ENCODE measurements at regions of chr10 and their contacts with region 1.

Region 1: DNA sequence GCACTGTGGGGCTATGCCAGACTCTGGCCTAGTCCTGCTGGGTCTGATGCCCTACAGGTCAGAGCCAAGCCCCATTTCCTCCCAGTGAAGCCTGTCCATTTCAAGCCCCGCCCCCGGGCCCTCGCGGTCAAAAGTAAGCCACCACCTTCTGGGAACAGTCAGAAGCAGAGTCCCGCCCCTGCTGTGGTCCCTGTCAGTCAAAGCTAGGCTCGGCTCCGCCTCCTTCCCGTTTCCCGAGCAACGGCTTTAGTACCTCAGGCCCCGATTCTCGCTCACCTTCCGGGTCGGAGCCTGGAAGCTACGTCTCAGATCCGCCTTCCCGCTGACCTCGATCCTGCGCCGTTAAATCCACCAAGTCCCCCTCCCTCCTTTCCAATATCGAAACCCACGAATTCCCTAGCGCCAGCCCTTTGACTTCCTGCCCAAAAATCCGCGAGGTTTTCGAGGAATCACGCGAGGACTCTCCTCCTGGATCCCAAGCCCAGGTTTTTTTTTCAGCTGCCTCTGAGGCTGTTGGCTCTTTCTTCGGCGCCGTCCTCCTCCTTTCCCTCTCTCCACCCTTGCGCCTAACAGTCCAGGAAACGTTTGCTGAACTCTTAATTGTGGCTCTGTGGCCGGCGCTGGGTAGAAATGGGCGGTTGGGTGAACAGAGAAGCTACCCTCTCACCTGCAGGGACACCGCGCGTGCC is 11.8 kb downstream of the SFXN3 start:
- DNase-seq: peak; percentile 96
- H3K4me3 Mint-ChIP-seq: peak overlapping the region; percentile 96
- H3K27ac Mint-ChIP-seq: peak overlapping the region; percentile 89
- H3K4me1 Mint-ChIP-seq: peaks cover 21% of the 10 kb centered on the region
- H3K27me3 Mint-ChIP-seq: peaks cover 18% of the 10 kb centered on the region

Region 2: DNA sequence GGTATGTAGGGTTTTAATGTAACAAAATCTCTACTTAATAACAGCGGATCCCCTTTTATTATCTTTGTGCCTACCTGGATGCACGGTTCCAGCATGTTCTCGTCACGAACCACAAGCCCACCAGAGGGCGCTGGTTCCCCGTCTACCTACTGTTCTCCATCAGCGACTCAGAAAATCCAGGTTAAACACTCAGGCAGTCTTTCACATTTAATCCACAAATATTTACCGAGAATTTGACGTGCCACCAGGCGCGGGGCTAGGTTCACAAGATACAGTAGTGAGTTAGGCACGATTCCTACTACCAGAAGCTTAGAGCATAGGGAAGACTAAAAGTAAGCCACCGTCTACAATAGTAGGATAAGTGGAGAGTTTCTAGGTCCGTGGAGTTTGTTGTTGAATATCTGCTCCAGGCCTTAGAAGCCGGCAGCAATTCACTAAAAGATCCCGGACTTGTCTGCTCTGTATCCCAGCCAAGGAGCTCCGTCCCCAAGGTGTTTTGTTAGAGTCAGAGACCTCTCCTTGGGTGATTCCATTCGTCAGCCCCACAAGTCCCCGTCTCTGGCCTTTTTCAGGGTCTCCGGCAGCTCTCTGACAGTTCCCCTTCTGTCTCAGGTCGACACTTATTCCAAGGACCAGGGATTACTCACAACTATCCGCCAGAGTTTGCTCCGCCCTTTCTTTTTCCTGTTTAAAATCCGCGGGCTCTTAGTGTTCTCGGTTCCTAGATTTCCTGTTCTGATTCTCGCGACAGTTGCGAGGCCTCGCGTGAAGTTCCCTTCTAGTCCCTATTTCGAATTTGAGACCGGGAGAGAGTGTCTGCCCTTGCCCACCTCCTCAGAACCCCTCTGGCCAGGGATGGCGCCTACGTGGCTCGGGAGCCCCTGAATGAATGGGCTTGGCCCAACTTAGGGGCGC is 17.5 kb after region 1 on chr10:
- CTCF ChIA-PET with region 1: interaction called, 559 read pairs
- POLR2A ChIA-PET with region 1: interaction called, 3 read pairs
- intact Hi-C with region 1: loop called (anchors 1 kb)
- DNase-seq: peak; percentile 92
- H3K4me3 Mint-ChIP-seq: peak overlapping the region; percentile 95
- H3K27ac Mint-ChIP-seq: peak overlapping the region; percentile 85
- H3K4me1 Mint-ChIP-seq: peaks cover 17% of the 10 kb centered on the region
- H3K27me3 Mint-ChIP-seq: peaks cover 21% of the 10 kb centered on the region

Region 3: GRCh38 chr10:101067356-101068083 is 24.7 kb after region 1 on chr10:
- CTCF ChIA-PET with region 1: interaction called, 559 read pairs
- POLR2A ChIA-PET with region 1: interaction called, 3 read pairs
- intact Hi-C with region 1: loop called (anchors 1 kb)
- DNase-seq: peak; percentile 87
- H3K4me3 Mint-ChIP-seq: peak overlapping the region; percentile 73
- H3K27ac Mint-ChIP-seq: no peak overlapping the region
- H3K4me1 Mint-ChIP-seq: peaks cover 12% of the 10 kb centered on the region
- H3K27me3 Mint-ChIP-seq: peaks cover 43% of the 10 kb centered on the region

Region 4: GRCh38 chr10:101161494-101162299 is 118.9 kb after region 1 on chr10:
- CTCF ChIA-PET with region 1: no interaction called
- POLR2A ChIA-PET with region 1: no interaction called
- intact Hi-C with region 1: no loop called
- DNase-seq: peak; percentile 82
- H3K4me3 Mint-ChIP-seq: no peak overlapping the region
- H3K27ac Mint-ChIP-seq: no peak overlapping the region
- H3K4me1 Mint-ChIP-seq: peaks cover 8% of the 10 kb centered on the region
- H3K27me3 Mint-ChIP-seq: peaks cover 53% of the 10 kb centered on the region

Measured in activated CD4-positive, alpha-beta memory T cell treated with anti-CD3 and anti-CD28 coated beads for 36 hours (primary cell).